Body of pancreas (tissue), 4 donors: ENCODE measurements at regions of chr3 and their contacts with region 1.

Region 1: DNA sequence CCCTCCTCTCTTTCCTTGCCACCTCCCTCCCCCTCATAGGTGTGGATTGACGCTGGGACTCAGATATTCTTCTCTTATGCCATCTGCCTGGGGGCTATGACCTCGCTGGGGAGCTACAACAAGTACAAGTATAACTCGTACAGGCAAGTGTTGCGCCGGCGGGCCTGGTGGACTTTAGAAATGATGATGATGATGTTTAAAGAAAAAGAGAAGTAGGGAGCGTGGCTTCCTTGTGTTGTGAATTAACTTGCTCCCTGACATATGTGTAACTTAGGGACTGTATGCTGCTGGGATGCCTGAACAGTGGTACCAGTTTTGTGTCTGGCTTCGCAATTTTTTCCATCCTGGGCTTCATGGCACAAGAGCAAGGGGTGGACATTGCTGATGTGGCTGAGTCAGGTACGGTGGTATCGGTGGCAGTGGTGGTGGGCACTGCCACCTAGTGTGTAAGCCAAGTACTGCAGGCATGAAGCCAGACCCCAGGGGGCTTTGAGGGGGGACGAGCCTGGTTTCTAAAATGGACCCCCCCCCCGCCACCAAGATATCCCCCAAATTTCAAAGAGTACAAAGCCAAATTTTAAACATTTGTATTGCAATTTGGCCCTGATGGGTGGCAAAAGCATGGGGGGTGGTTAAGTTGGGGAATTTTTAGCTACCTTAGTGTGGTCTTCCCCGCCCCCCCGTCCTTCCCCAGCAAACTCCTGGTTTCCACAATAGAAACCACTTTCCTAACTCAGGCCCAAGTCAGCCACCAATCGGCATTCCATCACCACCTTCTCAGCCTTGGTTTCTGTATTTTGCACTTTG is 65.6 kb downstream of the SLC6A6 start:
- DNase-seq: peak; percentile 39 to 55 (median 40)
- ATAC-seq: peak; percentile 66
- H3K4me3 ChIP-seq: no peak overlapping the region
- H3K27ac ChIP-seq: no peak overlapping the region
- H3K4me1 ChIP-seq: no peaks in the 10 kb centered on the region
- H3K27me3 ChIP-seq: no peaks in the 10 kb centered on the region
- CTCF ChIP-seq: peak; percentile 78 to 94 (median 88)
- POLR2A ChIP-seq: no peak

Region 2: GRCh38 chr3:14203521-14204079 is 264.4 kb before region 1 on chr3:
- intact Hi-C with region 1: loop called (anchors 5 kb)
- DNase-seq: peak; percentile 68 to 71 (median 69)
- ATAC-seq: peak; percentile 77
- H3K4me3 ChIP-seq: no peak overlapping the region
- H3K27ac ChIP-seq: peak overlapping the region in 2 of 4 donors; percentile 60 to 73
- H3K4me1 ChIP-seq: peaks cover 37% of the 10 kb centered on the region
- H3K27me3 ChIP-seq: no peaks in the 10 kb centered on the region
- CTCF ChIP-seq: peak; percentile 73 to 90 (median 86)
- POLR2A ChIP-seq: no peak

Region 3: GRCh38 chr3:14261229-14261628 is 206.8 kb before region 1 on chr3:
- intact Hi-C with region 1: loop called (anchors 5 kb)
- DNase-seq: peak; percentile 79 to 85 (median 82)
- ATAC-seq: peak; percentile 84
- H3K4me3 ChIP-seq: no peak overlapping the region
- H3K27ac ChIP-seq: no peak overlapping the region
- H3K4me1 ChIP-seq: no peaks in the 10 kb centered on the region
- H3K27me3 ChIP-seq: no peaks in the 10 kb centered on the region
- CTCF ChIP-seq: peak; percentile 92 to 100 (median 94)
- POLR2A ChIP-seq: no peak